Activated CD4-positive, alpha-beta memory T cell treated with anti-CD3 and anti-CD28 coated beads for 36 hours (primary cell): ENCODE measurements at regions of chr22 and their contacts with region 1.

Region 1: GRCh38 chr22:41800348-41801146 is at the start of gene CCDC134:
- DNase-seq: peak; percentile 95
- H3K4me3 Mint-ChIP-seq: peak within 1 kb of the TSS; percentile 98
- H3K27ac Mint-ChIP-seq: peak within 1 kb of the TSS; percentile 95
- H3K4me1 Mint-ChIP-seq: peaks cover 35% of the 10 kb centered on the region
- H3K27me3 Mint-ChIP-seq: no peaks in the 10 kb centered on the region
- total RNA-seq, gene CCDC134: 16.1 to 17.6 TPM

Region 2: DNA sequence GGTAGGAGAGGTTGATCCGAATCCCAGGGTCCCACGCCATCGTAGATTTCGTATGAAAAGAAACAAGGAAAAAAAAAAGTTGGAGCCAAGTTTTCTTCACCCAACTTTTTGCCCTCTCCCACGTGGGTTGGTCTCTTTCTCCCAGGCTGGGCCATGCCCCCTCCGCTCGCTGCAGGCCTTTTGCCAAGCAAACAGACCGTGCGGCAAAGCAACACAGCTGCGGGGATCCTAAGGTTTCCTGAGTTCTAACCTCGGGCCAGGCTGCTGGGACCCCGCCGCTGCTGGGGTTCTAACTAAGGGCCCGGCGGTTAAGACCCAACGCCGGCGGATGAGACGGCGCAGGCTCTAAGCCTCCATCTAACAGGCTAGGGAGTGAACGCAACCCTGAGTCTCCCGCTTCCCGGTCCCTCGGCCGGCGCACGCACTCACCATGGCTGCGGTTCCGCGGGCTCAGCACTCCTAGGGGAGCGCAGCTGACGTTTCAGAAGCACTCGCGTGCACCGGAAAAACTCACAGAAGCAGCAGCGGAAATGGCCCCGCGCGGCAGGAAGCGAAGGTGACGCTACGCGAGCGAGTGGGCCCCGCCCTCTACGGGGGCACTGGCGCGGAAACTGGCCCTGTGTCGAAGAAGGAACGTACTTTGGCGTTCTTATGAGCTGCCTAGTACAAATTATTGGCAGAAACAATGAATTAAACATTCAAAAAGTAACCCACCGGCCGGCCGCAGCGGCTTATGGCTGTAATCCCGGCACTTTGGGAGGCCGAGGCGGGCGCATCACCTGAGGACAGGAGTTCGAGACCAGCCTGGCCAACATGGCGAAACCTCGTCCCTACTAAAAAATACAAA is 112.0 kb before region 1 on chr22 and contains the start of gene SNU13:
- CTCF ChIA-PET with region 1: no interaction called
- POLR2A ChIA-PET with region 1: interaction called, 23 read pairs
- intact Hi-C with region 1: no loop called
- DNase-seq: peak; percentile 96
- H3K4me3 Mint-ChIP-seq: peak within 1 kb of the TSS; percentile 99
- H3K27ac Mint-ChIP-seq: peak within 1 kb of the TSS; percentile 97
- H3K4me1 Mint-ChIP-seq: peaks cover 34% of the 10 kb centered on the region
- H3K27me3 Mint-ChIP-seq: no peaks in the 10 kb centered on the region
- total RNA-seq, gene SNU13: 236 to 242 TPM

Region 3: GRCh38 chr22:41841085-41841659 is 40.6 kb after region 1 on chr22:
- CTCF ChIA-PET with region 1: no interaction called
- POLR2A ChIA-PET with region 1: interaction called, 10 read pairs
- intact Hi-C with region 1: no loop called
- DNase-seq: no peak
- H3K4me3 Mint-ChIP-seq: no peak overlapping the region
- H3K27ac Mint-ChIP-seq: peak overlapping the region; percentile 39
- H3K4me1 Mint-ChIP-seq: peaks cover 88% of the 10 kb centered on the region
- H3K27me3 Mint-ChIP-seq: no peaks in the 10 kb centered on the region